Mammary epithelial cell (primary cell): ENCODE measurements at regions of chr3 and their contacts with region 1.

Region 1: GRCh38 chr3:125585595-125586223 is 9.6 kb downstream of the OSBPL11 start:
- DNase-seq: peak; percentile 37
- H3K4me3 ChIP-seq: no peak overlapping the region
- H3K27ac ChIP-seq: no peak overlapping the region
- H3K4me1 ChIP-seq: peaks cover 5% of the 10 kb centered on the region
- H3K27me3 ChIP-seq: no peaks in the 10 kb centered on the region
- CTCF ChIP-seq: peak; percentile 87 to 95

Region 2: DNA sequence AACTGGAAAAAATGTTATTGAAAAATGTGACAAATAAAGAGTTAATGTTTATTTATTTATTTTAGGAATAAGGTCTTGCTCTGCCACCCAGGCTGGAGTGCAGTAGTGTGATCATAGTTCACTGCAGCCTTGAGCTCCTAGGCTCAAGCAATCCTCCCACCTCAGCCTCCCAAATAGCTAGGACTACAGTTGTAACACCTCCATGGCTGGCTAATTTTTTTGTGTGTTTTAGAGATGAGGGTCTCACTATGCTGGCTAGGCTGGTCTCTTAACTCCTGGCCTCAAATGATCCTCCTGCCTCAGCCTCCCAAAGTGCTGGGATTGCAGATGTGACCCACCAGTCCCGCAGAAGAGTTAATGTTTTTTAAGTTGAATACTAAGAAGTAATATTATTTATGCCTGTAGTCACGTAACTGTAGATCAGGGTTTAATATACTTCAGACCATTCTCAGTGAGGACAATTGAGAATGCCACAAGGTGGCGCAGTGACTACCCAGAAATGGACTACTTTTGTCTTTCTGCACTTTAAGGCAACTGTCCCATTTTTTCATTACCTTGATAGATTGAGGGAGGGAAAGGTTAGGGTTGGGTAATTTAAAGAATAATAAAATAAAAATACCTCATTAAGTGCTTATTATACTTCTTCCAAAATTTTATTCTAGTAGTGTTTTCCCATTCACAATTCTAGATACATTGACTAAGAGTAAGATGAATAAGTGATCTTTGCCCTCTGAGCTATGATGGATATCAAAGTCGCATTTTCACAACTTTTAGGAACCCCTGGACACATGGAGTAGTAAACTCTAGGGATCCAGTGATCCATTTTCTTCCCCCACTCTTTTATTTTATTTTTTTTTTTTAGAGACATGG is 657.1 kb before region 1 on chr3:
- CTCF ChIA-PET with region 1: no interaction called
- dilution Hi-C with region 1: no loop called
- in situ Hi-C with region 1: loop called in 1 of 2 experiments (anchors 10 kb)
- intact Hi-C with region 1: loop called (anchors 1 kb)
- DNase-seq: peak; percentile 45
- H3K4me3 ChIP-seq: no peak overlapping the region
- H3K27ac ChIP-seq: no peak overlapping the region
- H3K4me1 ChIP-seq: no peaks in the 10 kb centered on the region
- H3K27me3 ChIP-seq: no peaks in the 10 kb centered on the region
- CTCF ChIP-seq: peak; percentile 64 to 78

Region 3: GRCh38 chr3:125150525-125151441 is 434.9 kb before region 1 on chr3:
- CTCF ChIA-PET with region 1: no interaction called
- dilution Hi-C with region 1: no loop called
- in situ Hi-C with region 1: no loop called
- intact Hi-C with region 1: loop called (anchors 10 kb)
- DNase-seq: no peak
- H3K4me3 ChIP-seq: no peak overlapping the region
- H3K27ac ChIP-seq: no peak overlapping the region
- H3K4me1 ChIP-seq: no peaks in the 10 kb centered on the region
- H3K27me3 ChIP-seq: no peaks in the 10 kb centered on the region
- CTCF ChIP-seq: peak; percentile 45 to 67

Region 4: GRCh38 chr3:125374996-125375941 is 210.4 kb before region 1 on chr3 and contains the start of gene ZNF148:
- CTCF ChIA-PET with region 1: no interaction called
- dilution Hi-C with region 1: no loop called
- in situ Hi-C with region 1: no loop called
- intact Hi-C with region 1: loop called (anchors 10 kb)
- DNase-seq: peak; percentile 88
- H3K4me3 ChIP-seq: peak within 1 kb of the TSS; percentile 83 to 97 (median 96)
- H3K27ac ChIP-seq: peak within 1 kb of the TSS; percentile 82
- H3K4me1 ChIP-seq: peaks cover 9% of the 10 kb centered on the region
- H3K27me3 ChIP-seq: no peaks in the 10 kb centered on the region
- CTCF ChIP-seq: peak in 1 of 2 donors; percentile 17
- total RNA-seq, gene ZNF148: 32.8 to 36.9 TPM

Region 5: GRCh38 chr3:125507128-125507527 is 78.6 kb before region 1 on chr3:
- CTCF ChIA-PET with region 1: no interaction called
- dilution Hi-C with region 1: no loop called
- in situ Hi-C with region 1: no loop called
- intact Hi-C with region 1: no loop called
- DNase-seq: no peak
- H3K4me3 ChIP-seq: no peak overlapping the region
- H3K27ac ChIP-seq: no peak overlapping the region
- H3K4me1 ChIP-seq: peaks cover 5% of the 10 kb centered on the region
- H3K27me3 ChIP-seq: no peaks in the 10 kb centered on the region
- CTCF ChIP-seq: no peak

Region 6: DNA sequence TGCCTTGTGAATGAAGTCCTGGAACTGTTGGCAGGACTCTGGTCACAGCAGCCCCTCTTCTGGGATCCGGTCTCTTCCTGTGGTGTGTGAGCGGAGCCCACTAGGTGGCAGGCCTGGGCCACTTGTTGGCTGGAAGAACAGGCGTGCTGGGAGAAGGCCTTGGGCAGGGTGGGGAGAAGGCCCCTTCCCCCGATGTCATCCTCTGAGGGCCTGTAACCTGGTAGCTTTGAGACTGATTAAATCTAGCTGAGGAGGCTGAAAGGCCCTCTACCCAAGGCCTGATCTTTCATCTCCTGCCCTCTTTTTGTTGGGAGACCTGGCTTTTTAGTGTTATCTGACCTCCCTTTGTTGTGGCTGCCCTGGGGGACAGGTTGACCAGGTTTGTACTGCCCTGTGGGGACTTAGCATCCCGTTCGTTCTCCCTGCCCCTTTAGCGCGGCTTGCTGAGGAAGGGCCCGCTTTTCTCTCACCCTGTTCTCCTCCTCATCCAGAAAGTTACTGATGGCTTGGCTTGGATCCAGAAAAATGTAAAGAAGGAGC is 1166.7 kb after region 1 on chr3:
- CTCF ChIA-PET with region 1: no interaction called
- dilution Hi-C with region 1: no loop called
- in situ Hi-C with region 1: no loop called
- intact Hi-C with region 1: no loop called
- DNase-seq: peak; percentile 61
- H3K4me3 ChIP-seq: no peak overlapping the region
- H3K27ac ChIP-seq: peak overlapping the region; percentile 78
- H3K4me1 ChIP-seq: peaks cover 34% of the 10 kb centered on the region
- H3K27me3 ChIP-seq: no peaks in the 10 kb centered on the region
- CTCF ChIP-seq: peak; percentile 88 to 98